ENCODE measurements at regions of chr16 and their contacts with region 1.

Region 1: GRCh38 chr16:22001591-22001990 is 675 bp upstream of the PDZD9 start:
- DNase-seq: no peak
- ATAC-seq: no peak
- H3K4me3 Mint-ChIP-seq: no peak overlapping the region
- H3K27ac Mint-ChIP-seq: no peak overlapping the region
- H3K4me1 Mint-ChIP-seq: peaks cover 7% of the 10 kb centered on the region
- H3K27me3 Mint-ChIP-seq: no peaks in the 10 kb centered on the region

Region 2: GRCh38 chr16:21989133-21989532 is 12.5 kb before region 1 on chr16:
- CTCF ChIA-PET with region 1: interaction called, 18 read pairs
- POLR2A ChIA-PET with region 1: interaction called, 4 read pairs
- intact Hi-C with region 1: no loop called
- DNase-seq: no peak
- ATAC-seq: no peak
- H3K4me3 Mint-ChIP-seq: no peak overlapping the region
- H3K27ac Mint-ChIP-seq: no peak overlapping the region
- H3K4me1 Mint-ChIP-seq: peaks cover 9% of the 10 kb centered on the region
- H3K27me3 Mint-ChIP-seq: no peaks in the 10 kb centered on the region

Region 3: GRCh38 chr16:22070361-22071330 is 69.1 kb after region 1 on chr16:
- CTCF ChIA-PET with region 1: interaction called, 326 read pairs
- POLR2A ChIA-PET with region 1: no interaction called
- intact Hi-C with region 1: no loop called
- DNase-seq: no peak
- ATAC-seq: no peak
- H3K4me3 Mint-ChIP-seq: no peak overlapping the region
- H3K27ac Mint-ChIP-seq: no peak overlapping the region
- H3K4me1 Mint-ChIP-seq: peaks cover 8% of the 10 kb centered on the region
- H3K27me3 Mint-ChIP-seq: no peaks in the 10 kb centered on the region

Region 4: GRCh38 chr16:22098405-22099255 is 97.0 kb after region 1 on chr16:
- CTCF ChIA-PET with region 1: interaction called, 12 read pairs
- POLR2A ChIA-PET with region 1: no interaction called
- intact Hi-C with region 1: loop called (anchors 1 to 2 kb)
- DNase-seq: peak; percentile 13
- ATAC-seq: peak; percentile 87
- H3K4me3 Mint-ChIP-seq: no peak overlapping the region
- H3K27ac Mint-ChIP-seq: no peak overlapping the region
- H3K4me1 Mint-ChIP-seq: no peaks in the 10 kb centered on the region
- H3K27me3 Mint-ChIP-seq: peaks cover 6% of the 10 kb centered on the region